ENCODE measurements at regions of chr22 and their contacts with region 1.

Region 1: DNA sequence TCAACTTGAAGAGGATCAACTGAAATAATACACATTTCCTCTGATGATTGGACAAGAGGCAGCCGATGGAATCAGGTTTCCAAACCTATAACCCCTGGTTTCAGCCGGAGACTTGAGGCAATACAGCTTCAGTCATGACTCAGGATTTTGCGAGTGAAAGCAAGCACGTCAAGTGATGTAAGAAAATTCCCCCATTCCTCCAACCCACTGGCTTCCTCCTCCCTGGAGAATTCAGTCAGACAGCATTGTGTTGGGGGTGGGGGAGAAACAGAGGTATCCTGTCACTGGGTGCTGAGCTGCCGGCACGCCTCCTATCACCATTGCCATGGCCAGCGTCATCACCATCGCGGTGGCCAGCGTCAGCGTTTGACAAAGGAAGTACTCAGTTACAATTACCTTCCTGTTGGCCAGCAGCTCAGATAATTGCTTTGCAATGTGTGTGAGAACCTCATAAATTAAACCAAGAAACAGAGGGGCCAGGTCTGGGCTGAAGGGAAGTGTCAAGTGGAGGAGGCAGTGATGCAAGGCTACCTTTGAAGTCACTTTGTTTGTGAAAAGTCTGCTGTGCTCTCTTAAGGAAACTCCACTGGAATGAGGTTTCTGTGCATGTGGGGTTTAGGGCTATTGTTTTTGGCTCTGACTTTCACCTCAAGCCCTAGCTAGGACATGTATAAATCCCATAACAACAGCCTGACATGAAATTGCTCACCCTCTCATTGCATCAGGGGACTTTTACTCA is 50.2 kb downstream of the LIF start:
- DNase-seq: peak; percentile 83
- H3K4me3 Mint-ChIP-seq: peak overlapping the region; percentile 73
- H3K27ac Mint-ChIP-seq: peak overlapping the region; percentile 96
- H3K4me1 Mint-ChIP-seq: peaks cover 70% of the 10 kb centered on the region
- H3K27me3 Mint-ChIP-seq: no peaks in the 10 kb centered on the region

Region 2: DNA sequence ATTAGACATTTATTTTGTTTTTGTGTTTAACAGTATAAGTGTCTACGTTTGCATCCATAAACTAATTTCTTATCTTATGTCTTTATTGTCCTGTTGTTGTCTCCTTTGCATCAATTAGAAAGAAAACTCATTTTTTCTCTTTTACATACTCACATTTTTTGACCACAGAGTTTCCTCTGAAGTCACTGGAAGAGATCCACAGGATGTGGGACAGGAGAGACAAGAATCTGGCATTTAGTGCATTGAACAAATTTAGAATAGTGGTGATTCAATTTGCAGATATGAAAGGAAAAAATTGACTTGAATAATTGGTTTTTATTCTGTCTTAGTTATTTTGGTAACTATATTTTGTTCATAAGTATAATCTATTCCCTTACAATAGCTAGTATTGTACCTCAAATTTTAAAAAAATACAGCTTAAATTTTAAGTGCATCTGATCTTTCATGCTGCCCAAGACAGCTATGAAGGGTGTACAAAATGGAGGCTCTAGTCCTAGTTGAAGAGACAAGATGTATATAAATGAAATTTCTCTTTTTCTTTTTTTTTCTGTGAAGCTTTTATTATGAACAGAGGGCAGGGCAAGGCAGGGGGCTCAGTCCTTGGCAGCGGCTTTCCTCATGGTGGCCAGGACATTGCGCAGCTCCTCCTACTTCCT is 91.7 kb before region 1 on chr22:
- intact Hi-C with region 1: loop called (anchors 1 kb)
- DNase-seq: peak; percentile 79
- H3K4me3 Mint-ChIP-seq: peak overlapping the region; percentile 54
- H3K27ac Mint-ChIP-seq: peak overlapping the region; percentile 89
- H3K4me1 Mint-ChIP-seq: peaks cover 45% of the 10 kb centered on the region
- H3K27me3 Mint-ChIP-seq: no peaks in the 10 kb centered on the region

Region 3: DNA sequence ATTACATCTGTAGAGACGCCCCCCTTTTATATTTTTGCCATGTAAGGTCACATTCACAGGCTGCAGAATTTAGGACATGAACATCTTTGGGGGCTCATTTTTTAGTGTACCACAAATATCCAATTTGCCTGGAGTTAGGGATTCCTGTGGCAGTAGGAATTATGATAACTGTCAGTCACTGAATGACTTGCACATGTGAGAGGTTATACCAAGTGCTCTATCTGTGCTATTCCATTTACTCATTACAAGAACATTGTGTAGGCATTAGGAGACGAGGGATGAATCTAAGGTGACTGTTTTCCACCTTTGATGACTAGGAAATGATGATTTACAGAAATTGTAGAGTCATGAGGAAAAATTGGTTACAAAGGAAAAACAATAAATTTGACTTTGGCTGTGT is 29.0 kb before region 1 on chr22:
- intact Hi-C with region 1: loop called (anchors 1 kb)
- DNase-seq: no peak
- H3K4me3 Mint-ChIP-seq: no peak overlapping the region
- H3K27ac Mint-ChIP-seq: no peak overlapping the region
- H3K4me1 Mint-ChIP-seq: peaks cover 26% of the 10 kb centered on the region
- H3K27me3 Mint-ChIP-seq: no peaks in the 10 kb centered on the region

Region 4: GRCh38 chr22:30183861-30184278 is 12.4 kb before region 1 on chr22:
- intact Hi-C with region 1: loop called (anchors 1 kb)
- DNase-seq: peak; percentile 81
- H3K4me3 Mint-ChIP-seq: peak overlapping the region; percentile 61
- H3K27ac Mint-ChIP-seq: peak overlapping the region; percentile 96
- H3K4me1 Mint-ChIP-seq: peaks cover 82% of the 10 kb centered on the region
- H3K27me3 Mint-ChIP-seq: no peaks in the 10 kb centered on the region

Region 5: DNA sequence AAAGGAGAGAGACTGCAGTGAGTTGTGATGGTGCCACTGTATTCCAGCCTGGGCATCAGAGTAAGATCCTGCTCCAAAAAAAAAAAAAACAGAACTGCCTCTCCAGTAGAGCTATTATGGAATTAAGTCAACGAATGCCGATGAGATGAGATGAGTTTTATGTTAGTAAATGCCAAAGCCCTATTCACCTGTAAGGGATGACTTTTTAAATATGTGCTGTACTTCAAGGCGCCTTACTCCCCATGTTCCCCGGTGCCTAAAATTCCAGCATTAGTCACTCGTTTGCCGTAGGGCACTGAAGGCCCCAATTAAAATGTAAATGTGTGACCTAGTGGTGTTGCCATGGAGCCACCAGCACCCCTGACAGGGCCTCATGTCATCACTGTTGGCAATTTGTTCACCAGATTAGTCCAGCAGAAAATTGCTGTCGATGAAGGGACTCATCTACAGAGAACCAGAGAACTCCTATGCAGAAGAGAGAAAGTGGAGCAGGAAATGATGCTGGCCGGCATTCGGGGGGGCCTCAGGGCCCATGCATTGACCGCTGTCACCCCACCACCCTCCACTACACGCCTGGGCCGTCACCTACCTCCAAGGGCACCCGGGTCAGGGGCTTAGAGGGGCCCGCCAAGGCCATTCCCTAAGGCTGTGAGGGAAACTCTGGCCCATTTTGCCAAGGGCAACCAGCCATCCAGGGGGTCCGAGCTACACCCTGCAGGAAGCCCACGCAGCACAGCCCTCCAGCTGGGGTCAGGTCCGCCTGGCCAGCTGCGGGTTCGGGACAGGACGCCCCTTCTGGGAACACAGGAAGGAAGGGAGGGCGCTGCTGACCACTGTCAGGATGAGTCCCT is 32.4 kb after region 1 on chr22:
- intact Hi-C with region 1: no loop called
- DNase-seq: no peak
- H3K4me3 Mint-ChIP-seq: no peak overlapping the region
- H3K27ac Mint-ChIP-seq: peak overlapping the region; percentile 74
- H3K4me1 Mint-ChIP-seq: peaks cover 47% of the 10 kb centered on the region
- H3K27me3 Mint-ChIP-seq: no peaks in the 10 kb centered on the region

Region 6: GRCh38 chr22:30245985-30246901 is 49.9 kb after region 1 on chr22 and contains the start of gene LIF:
- intact Hi-C with region 1: loop called (anchors 5 kb)
- DNase-seq: peak; percentile 89
- H3K4me3 Mint-ChIP-seq: peak within 1 kb of the TSS; percentile 97
- H3K27ac Mint-ChIP-seq: peak within 1 kb of the TSS; percentile 100
- H3K4me1 Mint-ChIP-seq: peaks cover 67% of the 10 kb centered on the region
- H3K27me3 Mint-ChIP-seq: no peaks in the 10 kb centered on the region
- total RNA-seq, gene LIF: 509 and 511 TPM in 2 replicates